ENCODE measurements at regions of chr5 and their contacts with region 1.

Region 1: GRCh38 chr5:50962934-50963872 is 296.8 kb downstream of the PARP8 start:
- DNase-seq: peak in 8 of 9 donors; percentile 21 to 73 (median 44)
- ATAC-seq: peak; percentile 82
- H3K4me3 ChIP-seq: peak overlapping the region; percentile 53
- H3K4me3 Mint-ChIP-seq: peak overlapping the region; percentile 77 to 92 (median 86)
- H3K27ac ChIP-seq: no peak overlapping the region
- H3K27ac Mint-ChIP-seq: peak overlapping the region in 2 of 9 donors; percentile 29 to 52
- H3K4me1 ChIP-seq: peaks cover 10 to 30% of the 10 kb centered on the region in 2 donors
- H3K4me1 Mint-ChIP-seq: peaks cover 25 to 53% (median 45%) of the 10 kb centered on the region in 7 donors
- H3K27me3 ChIP-seq: peaks cover 17 to 23% of the 10 kb centered on the region in 2 donors
- H3K27me3 Mint-ChIP-seq: peaks cover 62 to 81% (median 70%) of the 10 kb centered on the region in 5 donors

Region 2: GRCh38 chr5:50647726-50648125 is 315.5 kb before region 1 on chr5:
- CTCF ChIA-PET with region 1: no interaction called
- POLR2A ChIA-PET with region 1: no interaction called
- intact Hi-C with region 1: no loop called
- DNase-seq: no peak
- ATAC-seq: no peak
- H3K4me3 ChIP-seq: no peak overlapping the region
- H3K4me3 Mint-ChIP-seq: no peak overlapping the region
- H3K27ac ChIP-seq: no peak overlapping the region
- H3K27ac Mint-ChIP-seq: peak overlapping the region in 7 of 9 donors; percentile 22 to 56 (median 26)
- H3K4me1 ChIP-seq: no peaks in the 10 kb centered on the region
- H3K4me1 Mint-ChIP-seq: peaks cover 6 to 43% (median 27%) of the 10 kb centered on the region in 7 donors
- H3K27me3 ChIP-seq: no peaks in the 10 kb centered on the region
- H3K27me3 Mint-ChIP-seq: no peaks in the 10 kb centered on the region

Region 3: GRCh38 chr5:50922942-50923767 is 40.0 kb before region 1 on chr5:
- CTCF ChIA-PET with region 1: no interaction called
- POLR2A ChIA-PET with region 1: no interaction called
- intact Hi-C with region 1: no loop called
- DNase-seq: no peak
- ATAC-seq: no peak
- H3K4me3 ChIP-seq: no peak overlapping the region
- H3K4me3 Mint-ChIP-seq: no peak overlapping the region
- H3K27ac ChIP-seq: no peak overlapping the region
- H3K27ac Mint-ChIP-seq: no peak overlapping the region
- H3K4me1 ChIP-seq: no peaks in the 10 kb centered on the region
- H3K4me1 Mint-ChIP-seq: no peaks in the 10 kb centered on the region
- H3K27me3 ChIP-seq: peaks cover 0 to 5% of the 10 kb centered on the region in 2 donors
- H3K27me3 Mint-ChIP-seq: peaks cover 0 to 21% (median 17%) of the 10 kb centered on the region in 5 donors

Region 4: DNA sequence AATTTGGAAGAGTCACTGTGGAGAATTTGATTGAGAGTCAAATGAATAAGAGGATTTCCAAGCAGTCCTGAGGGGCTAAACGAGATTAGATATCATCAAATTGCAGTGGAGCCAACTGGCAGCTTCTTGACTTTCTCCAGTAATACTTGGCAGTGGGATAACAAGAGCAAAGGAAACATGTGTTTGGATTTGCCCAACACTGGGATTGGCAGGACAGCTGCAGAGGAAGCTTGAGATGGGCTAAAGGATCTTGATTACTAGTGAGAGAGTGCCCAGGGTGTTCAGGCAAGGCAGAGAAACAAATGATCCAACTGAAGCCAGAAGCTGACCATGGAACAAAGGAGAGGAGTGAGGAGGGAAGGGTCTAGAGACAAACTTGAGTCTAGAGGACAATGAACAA is 64.1 kb after region 1 on chr5:
- CTCF ChIA-PET with region 1: no interaction called
- POLR2A ChIA-PET with region 1: no interaction called
- intact Hi-C with region 1: no loop called
- DNase-seq: no peak
- ATAC-seq: no peak
- H3K4me3 ChIP-seq: no peak overlapping the region
- H3K4me3 Mint-ChIP-seq: no peak overlapping the region
- H3K27ac ChIP-seq: no peak overlapping the region
- H3K27ac Mint-ChIP-seq: no peak overlapping the region
- H3K4me1 ChIP-seq: no peaks in the 10 kb centered on the region
- H3K4me1 Mint-ChIP-seq: no peaks in the 10 kb centered on the region
- H3K27me3 ChIP-seq: no peaks in the 10 kb centered on the region
- H3K27me3 Mint-ChIP-seq: peaks cover 0 to 9% (median 0%) of the 10 kb centered on the region in 5 donors

Region 5: GRCh38 chr5:51382763-51383490 is 419.7 kb after region 1 on chr5 and contains the start of gene ISL1:
- CTCF ChIA-PET with region 1: no interaction called
- POLR2A ChIA-PET with region 1: no interaction called
- intact Hi-C with region 1: loop called in 1 of 2 experiments (anchors 2 kb)
- DNase-seq: no peak
- ATAC-seq: no peak
- H3K4me3 ChIP-seq: no peak within 1 kb of the TSS
- H3K4me3 Mint-ChIP-seq: peak within 1 kb of the TSS in 1 of 10 donors; percentile 45
- H3K27ac ChIP-seq: no peak within 1 kb of the TSS
- H3K27ac Mint-ChIP-seq: peak within 1 kb of the TSS in 2 of 9 donors; percentile 65 to 75
- H3K4me1 ChIP-seq: no peaks in the 10 kb centered on the region
- H3K4me1 Mint-ChIP-seq: peaks cover 4 to 22% (median 11%) of the 10 kb centered on the region in 7 donors
- H3K27me3 ChIP-seq: peaks cover 0 to 29% of the 10 kb centered on the region in 2 donors
- H3K27me3 Mint-ChIP-seq: peaks cover 92 to 98% (median 94%) of the 10 kb centered on the region in 5 donors
- total RNA-seq, gene ISL1: not detected

Region 6: DNA sequence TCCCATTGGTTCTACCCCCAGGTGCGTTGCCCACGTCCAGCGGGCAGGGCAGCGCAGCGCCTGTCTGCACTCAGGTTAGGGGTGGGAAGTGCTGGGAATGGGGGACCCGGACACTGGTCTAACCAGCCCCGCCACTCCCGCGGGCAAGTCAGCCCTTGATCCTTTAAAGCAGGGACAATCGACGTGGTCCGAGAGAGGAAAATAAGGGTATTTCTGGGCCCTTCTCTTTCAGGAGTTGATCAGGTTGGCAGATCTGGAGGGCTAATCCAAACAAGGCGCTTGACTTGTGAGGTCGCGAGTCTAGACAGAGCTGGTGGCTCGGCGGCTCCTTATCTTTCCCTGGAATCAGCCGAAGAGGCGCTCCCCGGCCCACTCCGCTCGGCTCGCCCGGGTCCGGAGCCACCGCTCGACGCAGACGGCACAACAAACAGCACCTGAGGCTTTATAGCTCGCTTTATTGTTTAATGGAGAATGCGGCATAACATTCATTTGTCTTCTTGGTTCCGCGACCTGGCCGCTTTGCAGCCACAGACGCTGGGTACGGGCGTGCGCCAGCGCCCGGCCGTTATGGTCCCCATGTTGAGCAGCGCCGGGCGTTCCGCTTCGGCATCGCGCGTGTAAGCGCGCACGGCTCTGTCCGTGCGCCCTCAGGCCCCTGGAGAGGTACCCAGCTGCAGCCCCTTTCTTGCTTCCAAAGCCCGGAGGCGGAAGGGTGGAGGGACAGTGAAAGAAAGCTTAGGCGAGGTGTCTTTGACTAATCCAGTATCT is 435.9 kb after region 1 on chr5:
- CTCF ChIA-PET with region 1: no interaction called
- POLR2A ChIA-PET with region 1: no interaction called
- intact Hi-C with region 1: loop called in 1 of 2 experiments (anchors 5 kb)
- DNase-seq: no peak
- ATAC-seq: no peak
- H3K4me3 ChIP-seq: no peak overlapping the region
- H3K4me3 Mint-ChIP-seq: no peak overlapping the region
- H3K27ac ChIP-seq: no peak overlapping the region
- H3K27ac Mint-ChIP-seq: peak overlapping the region in 1 of 9 donors; percentile 46
- H3K4me1 ChIP-seq: no peaks in the 10 kb centered on the region
- H3K4me1 Mint-ChIP-seq: no peaks in the 10 kb centered on the region
- H3K27me3 ChIP-seq: no peaks in the 10 kb centered on the region
- H3K27me3 Mint-ChIP-seq: peaks cover 56 to 74% (median 62%) of the 10 kb centered on the region in 5 donors

Region 7: DNA sequence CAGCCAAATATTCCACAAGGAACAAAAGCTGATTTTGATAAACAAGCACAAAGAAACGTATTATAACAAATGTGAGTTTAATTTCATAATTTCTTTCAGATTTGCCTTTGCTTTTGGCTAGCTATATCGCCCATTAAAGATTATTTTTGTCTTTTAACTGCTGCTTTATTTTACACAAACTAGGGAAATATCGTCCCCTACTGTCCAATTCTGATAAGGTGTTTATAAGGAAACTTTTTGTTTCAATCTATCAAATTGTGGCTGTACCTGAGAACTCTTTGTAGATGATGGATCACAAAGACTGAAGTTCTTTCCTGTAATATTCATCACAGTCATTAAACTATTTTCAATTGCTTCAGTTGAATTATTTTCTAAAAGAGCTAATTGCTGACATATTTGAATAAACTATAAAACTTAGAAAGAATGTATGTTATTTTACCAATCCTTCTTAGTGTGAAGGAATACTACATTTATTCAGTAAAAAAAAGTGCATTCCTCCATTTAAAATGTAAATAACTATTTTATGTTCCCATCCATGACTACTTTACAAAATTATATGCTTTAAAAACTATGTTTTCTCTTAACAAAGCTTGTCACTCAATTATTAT is 1393.2 kb after region 1 on chr5:
- CTCF ChIA-PET with region 1: no interaction called
- POLR2A ChIA-PET with region 1: no interaction called
- intact Hi-C with region 1: loop called in 1 of 2 experiments (anchors 10 kb)
- DNase-seq: no peak
- ATAC-seq: no peak
- H3K4me3 ChIP-seq: no peak overlapping the region
- H3K4me3 Mint-ChIP-seq: no peak overlapping the region
- H3K27ac ChIP-seq: no peak overlapping the region
- H3K27ac Mint-ChIP-seq: no peak overlapping the region
- H3K4me1 ChIP-seq: no peaks in the 10 kb centered on the region
- H3K4me1 Mint-ChIP-seq: no peaks in the 10 kb centered on the region
- H3K27me3 ChIP-seq: no peaks in the 10 kb centered on the region
- H3K27me3 Mint-ChIP-seq: peaks cover 0 to 4% (median 0%) of the 10 kb centered on the region in 5 donors

Region 8: GRCh38 chr5:52560366-52560765 is 1597.2 kb after region 1 on chr5:
- CTCF ChIA-PET with region 1: no interaction called
- POLR2A ChIA-PET with region 1: no interaction called
- intact Hi-C with region 1: loop called in 1 of 2 experiments (anchors 1 kb)
- DNase-seq: no peak
- ATAC-seq: no peak
- H3K4me3 ChIP-seq: no peak overlapping the region
- H3K4me3 Mint-ChIP-seq: no peak overlapping the region
- H3K27ac ChIP-seq: no peak overlapping the region
- H3K27ac Mint-ChIP-seq: no peak overlapping the region
- H3K4me1 ChIP-seq: no peaks in the 10 kb centered on the region
- H3K4me1 Mint-ChIP-seq: peaks cover 0 to 1% (median 0%) of the 10 kb centered on the region in 7 donors
- H3K27me3 ChIP-seq: peaks cover 0 to 4% of the 10 kb centered on the region in 2 donors
- H3K27me3 Mint-ChIP-seq: peaks cover 5 to 21% (median 17%) of the 10 kb centered on the region in 5 donors

Region 9: GRCh38 chr5:52657247-52657645 is 1694.0 kb after region 1 on chr5:
- CTCF ChIA-PET with region 1: interaction called, 7 read pairs
- POLR2A ChIA-PET with region 1: no interaction called
- intact Hi-C with region 1: loop called (anchors 1 kb)
- DNase-seq: peak in 6 of 9 donors; percentile 14 to 61 (median 50)
- ATAC-seq: peak; percentile 57
- H3K4me3 ChIP-seq: no peak overlapping the region
- H3K4me3 Mint-ChIP-seq: no peak overlapping the region
- H3K27ac ChIP-seq: no peak overlapping the region
- H3K27ac Mint-ChIP-seq: no peak overlapping the region
- H3K4me1 ChIP-seq: no peaks in the 10 kb centered on the region
- H3K4me1 Mint-ChIP-seq: peaks cover 0 to 6% (median 0%) of the 10 kb centered on the region in 7 donors
- H3K27me3 ChIP-seq: no peaks in the 10 kb centered on the region
- H3K27me3 Mint-ChIP-seq: peaks cover 7 to 40% (median 11%) of the 10 kb centered on the region in 5 donors

Region 10: GRCh38 chr5:52915176-52915875 is 1952.1 kb after region 1 on chr5:
- CTCF ChIA-PET with region 1: no interaction called
- POLR2A ChIA-PET with region 1: no interaction called
- intact Hi-C with region 1: loop called (anchors 1 to 10 kb)
- DNase-seq: peak in 8 of 9 donors; percentile 30 to 77 (median 69)
- ATAC-seq: peak; percentile 97
- H3K4me3 ChIP-seq: no peak overlapping the region
- H3K4me3 Mint-ChIP-seq: peak overlapping the region in 9 of 10 donors; percentile 19 to 79 (median 73)
- H3K27ac ChIP-seq: no peak overlapping the region
- H3K27ac Mint-ChIP-seq: peak overlapping the region in 2 of 9 donors; percentile 10 to 30
- H3K4me1 ChIP-seq: no peaks in the 10 kb centered on the region
- H3K4me1 Mint-ChIP-seq: peaks cover 5 to 9% (median 8%) of the 10 kb centered on the region in 7 donors
- H3K27me3 ChIP-seq: no peaks in the 10 kb centered on the region
- H3K27me3 Mint-ChIP-seq: peaks cover 0 to 9% (median 0%) of the 10 kb centered on the region in 5 donors